WTC11 (cell line): ENCODE measurements at regions of chr12 and their contacts with region 1.

Region 1: DNA sequence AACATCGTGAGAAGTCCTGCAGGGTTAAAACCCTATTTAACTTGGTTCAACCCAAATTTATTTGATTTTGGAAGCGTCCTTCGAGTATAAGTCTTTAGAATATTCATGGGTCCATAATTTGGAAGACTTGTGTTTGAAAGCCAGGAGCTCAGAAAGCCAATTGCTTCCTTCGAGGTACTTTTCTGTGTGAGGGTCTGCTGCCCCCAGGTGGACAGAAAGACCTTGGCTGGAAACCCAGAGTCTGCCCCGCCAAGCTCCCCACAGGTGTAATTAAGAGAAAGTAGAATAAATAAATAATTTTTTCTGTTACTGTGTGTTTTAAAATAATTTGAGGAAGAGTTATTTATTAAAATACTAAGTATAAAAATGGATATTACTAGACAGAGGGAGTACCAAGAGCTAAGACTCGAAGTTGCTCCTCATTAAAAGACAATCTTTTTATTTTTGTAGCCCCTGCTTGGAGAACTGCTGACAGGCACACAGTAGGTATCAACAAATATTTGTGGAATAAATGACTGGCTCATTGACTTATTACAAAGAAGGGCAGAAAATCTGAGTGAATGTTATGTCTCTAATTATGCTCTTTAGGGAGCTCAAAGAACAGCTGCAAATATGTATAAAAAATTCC is 105.8 kb downstream of the PAH start:
- DNase-seq: peak; percentile 71
- ATAC-seq: peak; percentile 83
- H3K4me3 Mint-ChIP-seq: no peak overlapping the region
- H3K27ac Mint-ChIP-seq: no peak overlapping the region
- H3K4me1 Mint-ChIP-seq: peaks cover 6% of the 10 kb centered on the region
- H3K27me3 Mint-ChIP-seq: no peaks in the 10 kb centered on the region; the same call in 1 of the 2 replicates
- CTCF ChIP-seq: peak; percentile 72

Region 2: DNA sequence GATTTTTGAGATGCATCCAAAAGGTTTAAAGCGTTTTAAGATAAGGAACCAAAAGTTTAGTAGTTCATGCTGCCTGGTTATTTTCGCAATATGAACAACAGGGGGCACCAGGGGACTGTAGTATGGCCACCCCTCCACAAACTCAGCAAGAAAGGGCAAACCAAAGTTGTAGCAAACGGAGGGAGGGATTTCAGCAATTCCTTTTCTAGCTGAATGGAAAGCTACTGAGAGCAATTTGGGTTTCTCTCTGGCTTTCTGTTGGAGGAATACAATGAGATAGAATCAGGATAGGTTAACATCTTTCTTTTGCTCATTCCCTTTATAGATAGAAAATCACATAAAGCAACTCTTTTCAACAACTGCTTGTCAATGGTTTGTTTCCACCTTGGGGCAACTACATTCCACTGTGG is 871.4 kb before region 1 on chr12:
- CTCF ChIA-PET with region 1: interaction called, 18 read pairs
- POLR2A ChIA-PET with region 1: no interaction called
- DNase-seq: peak; percentile 59
- ATAC-seq: peak; percentile 84
- H3K4me3 Mint-ChIP-seq: no peak overlapping the region
- H3K27ac Mint-ChIP-seq: 0 out of 2 replicates have a peak overlapping the region, but pooled peaks have one; percentile 46
- H3K4me1 Mint-ChIP-seq: peaks cover 20% of the 10 kb centered on the region
- H3K27me3 Mint-ChIP-seq: no peaks in the 10 kb centered on the region
- CTCF ChIP-seq: peak; percentile 51

Region 3: GRCh38 chr12:102300824-102301461 is 510.3 kb before region 1 on chr12:
- CTCF ChIA-PET with region 1: interaction called, 10 read pairs
- POLR2A ChIA-PET with region 1: no interaction called
- DNase-seq: peak; percentile 21
- ATAC-seq: peak; percentile 100
- H3K4me3 Mint-ChIP-seq: no peak overlapping the region
- H3K27ac Mint-ChIP-seq: no peak overlapping the region
- H3K4me1 Mint-ChIP-seq: no peaks in the 10 kb centered on the region
- H3K27me3 Mint-ChIP-seq: no peaks in the 10 kb centered on the region
- CTCF ChIP-seq: no peak

Region 4: DNA sequence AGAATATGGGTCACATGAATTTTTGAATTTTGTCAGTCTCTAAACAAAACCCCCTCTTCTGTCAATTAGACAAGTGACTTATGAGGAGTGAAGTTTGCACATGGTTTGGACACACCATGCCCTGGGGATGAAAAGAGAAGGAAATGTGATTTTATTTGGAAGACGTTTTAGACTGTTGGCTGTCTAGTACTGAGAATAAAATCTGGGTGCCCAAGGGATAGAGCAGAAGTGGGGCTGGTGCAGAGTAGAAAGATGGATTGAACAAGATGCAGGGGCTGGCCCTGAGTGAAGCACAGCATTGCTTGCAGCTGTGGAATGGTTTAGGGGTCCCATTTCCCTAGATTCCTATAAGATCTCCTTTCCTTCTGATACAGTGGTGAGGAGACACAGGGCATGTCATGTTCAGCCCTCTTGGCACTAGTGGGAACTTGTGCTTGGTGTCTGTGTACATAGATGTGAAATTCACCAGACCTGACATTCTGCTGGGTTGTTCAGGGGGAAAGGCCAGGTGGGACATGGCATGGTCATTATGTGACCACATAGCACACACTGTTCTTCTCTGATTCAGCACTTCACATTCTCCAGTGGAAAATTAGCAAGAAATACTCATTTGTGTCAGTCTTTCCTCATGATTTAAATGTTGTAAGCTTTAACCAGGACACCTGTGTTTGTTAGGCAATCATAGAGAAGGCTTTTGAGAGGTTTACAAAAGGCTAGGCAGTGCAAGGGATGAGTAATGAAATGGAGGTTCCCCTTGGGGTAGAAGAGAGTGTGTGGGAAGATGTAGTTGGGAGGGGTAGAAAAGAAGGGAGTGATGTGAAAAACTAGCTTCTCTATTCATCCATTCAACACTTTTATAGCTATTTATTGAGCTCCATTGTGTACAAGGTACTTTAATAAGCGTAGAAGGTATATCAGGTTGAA is 128.6 kb before region 1 on chr12:
- CTCF ChIA-PET with region 1: no interaction called
- POLR2A ChIA-PET with region 1: no interaction called
- DNase-seq: no peak
- ATAC-seq: no peak
- H3K4me3 Mint-ChIP-seq: no peak overlapping the region
- H3K27ac Mint-ChIP-seq: no peak overlapping the region
- H3K4me1 Mint-ChIP-seq: peaks cover 10% of the 10 kb centered on the region
- H3K27me3 Mint-ChIP-seq: no peaks in the 10 kb centered on the region
- CTCF ChIP-seq: no peak

Region 5: GRCh38 chr12:102702447-102703114 is 108.6 kb before region 1 on chr12:
- CTCF ChIA-PET with region 1: interaction called, 13 read pairs
- POLR2A ChIA-PET with region 1: no interaction called
- DNase-seq: peak; percentile 61
- ATAC-seq: peak; percentile 76
- H3K4me3 Mint-ChIP-seq: no peak overlapping the region
- H3K27ac Mint-ChIP-seq: no peak overlapping the region
- H3K4me1 Mint-ChIP-seq: peaks cover 8% of the 10 kb centered on the region
- H3K27me3 Mint-ChIP-seq: no peaks in the 10 kb centered on the region
- CTCF ChIP-seq: peak; percentile 71

Region 6: DNA sequence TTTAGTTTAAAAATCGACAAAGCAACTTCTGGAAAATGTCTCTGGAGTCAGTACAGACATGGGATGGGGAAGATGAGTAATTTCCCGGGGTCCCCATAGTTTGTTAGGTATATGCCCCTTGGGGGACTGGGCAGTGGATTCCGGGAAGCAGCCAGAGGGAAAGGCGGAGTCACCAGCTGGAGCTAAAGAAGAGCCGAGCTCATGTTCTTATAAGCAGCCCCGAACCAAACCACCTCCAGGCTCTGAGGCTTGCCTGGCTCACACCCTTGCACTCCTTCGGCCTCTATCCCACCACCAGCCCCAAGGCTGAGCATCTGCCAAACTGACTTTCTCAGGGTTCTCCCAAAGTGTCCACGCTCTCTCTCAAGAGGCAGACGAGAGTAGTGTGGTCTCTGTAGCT is 12.0 kb before region 1 on chr12:
- CTCF ChIA-PET with region 1: interaction called, 12 read pairs
- POLR2A ChIA-PET with region 1: no interaction called
- DNase-seq: no peak
- ATAC-seq: no peak; the same call in 1 of the 2 replicates
- H3K4me3 Mint-ChIP-seq: no peak overlapping the region
- H3K27ac Mint-ChIP-seq: no peak overlapping the region
- H3K4me1 Mint-ChIP-seq: no peaks in the 10 kb centered on the region
- H3K27me3 Mint-ChIP-seq: no peaks in the 10 kb centered on the region; the same call in 1 of the 2 replicates
- CTCF ChIP-seq: no peak

Region 7: DNA sequence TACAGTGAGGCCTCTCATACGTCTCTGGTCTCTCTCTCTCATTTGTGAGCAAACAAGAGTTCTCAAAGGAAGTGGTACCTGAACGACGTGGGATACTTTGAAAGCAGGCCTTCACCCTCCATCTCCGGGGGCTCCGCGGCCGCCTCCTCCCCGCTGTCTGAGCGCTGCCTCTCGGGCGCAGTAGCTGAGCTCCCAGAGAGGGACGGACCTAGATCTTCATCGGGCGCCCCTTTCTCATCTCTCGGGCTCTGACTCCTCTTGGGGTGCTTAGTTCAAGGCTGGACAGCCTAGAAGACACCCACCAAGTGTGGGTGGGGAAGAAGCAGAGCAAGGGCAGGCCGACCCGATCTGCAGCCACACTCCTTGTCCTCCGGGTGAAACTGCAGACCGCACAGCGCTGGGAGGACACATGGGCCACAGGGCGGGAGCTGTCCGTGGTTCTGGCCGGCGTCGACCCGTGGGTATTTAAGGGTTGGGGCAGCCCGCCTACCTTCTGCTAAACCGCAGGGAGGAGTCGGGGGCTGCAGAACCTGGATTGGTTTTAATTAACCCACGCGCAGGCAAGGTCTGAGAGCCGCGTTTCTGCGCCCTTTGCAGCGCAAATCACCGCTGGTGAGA is 13.1 kb after region 1 on chr12:
- CTCF ChIA-PET with region 1: interaction called, 24 read pairs
- POLR2A ChIA-PET with region 1: no interaction called
- DNase-seq: peak; percentile 89
- ATAC-seq: peak; percentile 99
- H3K4me3 Mint-ChIP-seq: peak overlapping the region; percentile 61
- H3K27ac Mint-ChIP-seq: no peak overlapping the region
- H3K4me1 Mint-ChIP-seq: peaks cover 14% of the 10 kb centered on the region
- H3K27me3 Mint-ChIP-seq: peaks cover 52% of the 10 kb centered on the region
- CTCF ChIP-seq: no peak